Cardiac septum (tissue), 1 donor: ENCODE measurements at regions of chr6 and their contacts with region 1.

Region 1: GRCh38 chr6:89368107-89368506 is 15.6 kb upstream of the UBE2J1 start:
- DNase-seq: no peak

Region 2: DNA sequence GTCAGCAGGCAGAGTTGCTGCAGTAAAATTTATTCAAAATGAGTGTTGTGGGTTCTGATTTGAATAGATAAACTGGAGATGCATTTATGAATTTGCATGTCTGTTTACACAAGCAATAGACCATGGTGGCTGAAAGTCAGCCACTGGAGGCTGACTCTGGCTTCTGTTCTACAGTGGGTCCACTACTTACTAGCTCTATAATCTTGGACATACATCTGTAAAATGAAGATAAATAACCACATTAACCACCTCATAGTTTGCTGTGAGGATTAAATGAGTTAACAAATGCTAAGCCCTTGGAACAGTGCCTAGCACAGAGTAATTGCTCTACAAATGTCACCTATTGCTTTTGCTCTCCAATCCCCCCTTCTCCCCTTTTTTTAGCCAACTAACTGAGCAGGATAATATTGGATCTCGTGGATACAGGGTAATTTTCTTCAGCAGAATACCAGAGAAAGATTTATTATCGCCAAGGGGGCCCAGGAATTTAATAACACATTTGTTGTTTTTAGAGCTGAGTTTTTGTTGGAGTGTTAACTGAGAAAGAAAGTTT is 223.7 kb before region 1 on chr6:
- intact Hi-C with region 1: no loop called
- DNase-seq: no peak

Region 3: DNA sequence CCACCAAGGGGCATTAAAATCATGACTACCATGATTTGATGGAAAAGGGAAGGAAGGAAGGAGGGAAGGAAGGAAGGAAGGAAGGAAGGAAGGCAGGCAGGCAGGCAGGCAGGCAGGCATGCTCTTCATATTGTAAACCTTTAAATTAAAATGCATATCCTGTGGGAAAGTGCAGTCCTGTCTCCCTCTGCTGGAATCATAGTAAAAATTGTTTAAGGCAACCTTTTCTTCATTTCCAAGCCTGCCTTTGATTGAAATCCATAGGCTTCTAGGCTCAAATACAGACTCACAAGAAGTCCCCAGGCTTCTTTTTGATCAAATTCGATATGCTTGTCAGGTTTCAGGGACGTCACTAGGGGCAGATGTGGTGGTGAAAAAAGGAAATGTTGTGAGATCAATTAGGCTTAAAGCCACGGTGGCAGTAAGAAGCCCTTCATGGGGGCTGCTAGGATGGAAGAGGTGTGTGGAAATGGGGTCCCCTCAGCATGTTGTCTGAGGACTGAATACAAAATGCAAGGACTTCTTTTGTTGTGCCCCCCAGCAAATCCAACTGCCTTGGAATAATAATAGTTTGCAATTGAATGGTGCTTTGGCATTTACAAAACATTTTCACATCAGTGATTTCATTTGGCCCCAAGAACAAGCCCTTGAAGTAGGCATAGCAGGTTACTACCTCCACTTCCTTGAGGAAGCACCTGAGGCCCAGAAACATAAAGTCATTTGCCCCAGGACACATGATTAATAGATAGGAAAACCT is 125.4 kb before region 1 on chr6:
- intact Hi-C with region 1: no loop called
- DNase-seq: no peak

Region 4: GRCh38 chr6:89311853-89312531 is 56.1 kb before region 1 on chr6:
- intact Hi-C with region 1: loop called (anchors 5 kb)
- DNase-seq: peak; percentile 83

Region 5: DNA sequence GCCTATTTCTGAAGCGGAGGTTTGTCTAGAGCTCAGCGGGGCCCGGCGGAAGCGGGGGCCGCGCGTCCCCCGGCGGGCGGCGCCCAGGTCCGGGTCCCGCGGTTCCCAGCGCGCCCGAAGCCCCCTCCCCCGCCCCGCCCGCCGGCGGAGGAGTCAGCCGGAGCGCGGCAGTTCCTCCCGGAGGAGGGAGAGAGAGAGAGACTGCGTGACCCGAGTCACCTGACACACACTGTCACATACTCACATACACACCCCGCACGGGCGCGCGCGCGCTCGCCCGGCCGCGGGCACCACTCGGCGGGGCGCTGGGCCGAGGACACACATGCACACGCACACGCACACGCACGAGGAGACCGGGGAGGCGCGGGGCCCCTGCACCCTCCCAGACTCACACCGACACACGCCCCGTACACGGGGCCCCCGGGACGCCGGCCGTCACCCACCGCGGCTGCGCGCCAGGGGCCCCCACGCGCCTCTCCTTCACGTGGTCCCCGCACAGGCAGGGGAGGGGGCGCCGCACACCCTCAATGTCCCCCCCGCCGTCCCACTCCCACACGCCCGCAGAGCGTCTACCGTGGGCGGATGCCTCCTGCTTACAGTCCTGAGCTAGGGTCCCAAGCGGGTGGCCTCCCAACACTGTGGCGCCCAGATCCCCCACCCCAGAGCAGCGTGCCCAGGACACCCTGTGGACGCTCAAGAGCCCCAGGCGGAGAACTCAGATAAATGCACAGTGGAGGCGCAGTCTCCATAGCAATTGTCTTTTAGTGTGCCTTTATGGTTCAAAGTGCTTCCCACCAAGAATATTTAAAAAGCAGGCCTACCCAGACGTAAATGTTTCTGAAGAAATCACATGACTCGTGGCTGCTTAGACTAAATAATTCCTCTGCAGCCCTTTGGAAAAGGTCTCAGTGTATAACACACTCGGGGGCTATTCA is 44.2 kb after region 1 on chr6 and contains the start of gene RRAGD:
- intact Hi-C with region 1: loop called (anchors 5 kb)
- DNase-seq: peak; percentile 94
- total RNA-seq, gene RRAGD: 90.5 TPM